ENCODE measurements at regions of chr6 and their contacts with region 1.

Region 1: DNA sequence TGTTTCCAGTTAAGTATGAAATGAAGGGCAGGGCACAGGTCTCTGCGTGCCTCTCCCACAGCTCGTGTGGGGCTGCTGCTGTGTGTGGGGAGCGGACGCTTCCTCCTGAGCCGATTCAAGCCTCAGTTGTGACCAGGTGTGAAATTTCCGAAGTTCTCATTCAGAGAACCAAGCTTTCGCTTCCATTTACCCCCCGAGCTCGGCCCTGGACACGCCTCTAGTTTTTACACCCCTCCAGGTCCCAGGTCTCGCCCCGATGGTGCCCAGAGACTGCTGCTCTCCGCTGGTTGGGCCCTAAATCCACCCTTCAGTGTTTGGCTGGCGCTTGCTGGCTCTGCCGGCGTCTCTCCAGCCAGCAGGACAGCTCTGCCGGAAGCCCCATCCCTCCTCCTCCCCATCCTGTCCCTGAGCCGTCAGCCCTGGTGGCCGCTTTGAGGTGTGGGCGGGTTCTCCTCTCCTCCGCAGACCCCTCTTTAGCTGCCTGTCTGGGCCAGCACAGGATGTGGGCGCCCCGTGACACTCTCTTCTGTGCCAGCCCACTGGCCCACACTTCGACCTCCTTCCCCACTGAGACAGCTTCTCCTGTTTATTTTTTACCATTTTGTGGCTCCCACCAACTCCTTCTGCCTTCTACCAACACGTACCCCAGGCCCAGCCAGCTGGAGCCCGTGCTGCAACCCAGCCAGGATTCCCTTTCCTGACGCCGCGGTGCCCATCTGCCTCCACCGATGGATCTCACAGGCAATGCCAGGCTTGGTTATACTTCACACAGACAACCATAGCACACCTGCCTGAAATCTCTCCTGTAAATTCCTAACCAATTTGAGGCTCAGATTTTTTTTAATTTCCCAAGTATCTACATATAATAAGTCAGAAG is 142.8 kb downstream of the DLL1 start:
- DNase-seq: peak; percentile 68 to 77
- ATAC-seq: peak; percentile 74 to 85 (median 81)
- H3K4me3 ChIP-seq: peak overlapping the region; percentile 34
- H3K4me3 Mint-ChIP-seq: peak overlapping the region; percentile 95
- H3K27ac ChIP-seq: peak overlapping the region; percentile 80
- H3K27ac Mint-ChIP-seq: peak overlapping the region; percentile 94
- H3K4me1 ChIP-seq: peaks cover 90% of the 10 kb centered on the region
- H3K4me1 Mint-ChIP-seq: peaks cover 62 to 84% of the 10 kb centered on the region in 2 donors
- H3K27me3 ChIP-seq: peaks cover 3% of the 10 kb centered on the region
- H3K27me3 Mint-ChIP-seq: peaks cover 0 to 30% of the 10 kb centered on the region in 2 donors
- CTCF ChIP-seq: no peak

Region 2: DNA sequence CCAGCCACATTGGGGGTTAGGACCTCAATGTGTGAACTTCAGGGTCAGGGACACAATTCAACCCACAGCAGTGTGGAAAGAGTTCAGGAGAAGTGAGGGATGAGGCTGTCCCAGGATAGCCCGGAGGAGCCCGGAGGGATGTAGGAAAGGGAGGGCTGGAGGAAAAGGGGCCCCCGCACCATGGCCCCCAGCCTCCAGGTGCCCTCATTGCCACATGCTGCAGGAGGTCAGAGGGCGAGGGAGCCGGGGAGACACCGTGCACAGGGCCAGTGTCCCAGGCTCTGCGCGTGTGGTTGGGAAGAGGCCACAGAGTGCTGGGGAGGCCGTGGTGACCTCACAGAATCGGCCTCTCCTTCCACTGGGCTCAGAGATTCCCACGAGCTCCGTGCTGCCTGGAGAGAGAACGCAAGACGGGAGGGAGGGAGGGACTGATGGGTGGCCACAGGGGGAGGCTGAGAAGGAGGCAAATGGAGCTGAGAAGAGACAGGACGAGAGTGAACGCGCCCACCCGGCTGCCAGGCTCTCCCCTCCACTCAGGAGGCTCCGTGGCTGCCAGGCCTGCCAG is 72.3 kb before region 1 on chr6:
- intact Hi-C with region 1: no loop called
- DNase-seq: peak in 1 of 2 donors; percentile 13
- ATAC-seq: peak in 1 of 3 donors; percentile 35
- H3K4me3 ChIP-seq: no peak overlapping the region
- H3K4me3 Mint-ChIP-seq: no peak overlapping the region
- H3K27ac ChIP-seq: no peak overlapping the region
- H3K27ac Mint-ChIP-seq: no peak overlapping the region
- H3K4me1 ChIP-seq: no peaks in the 10 kb centered on the region
- H3K4me1 Mint-ChIP-seq: no peaks in the 10 kb centered on the region
- H3K27me3 ChIP-seq: no peaks in the 10 kb centered on the region
- H3K27me3 Mint-ChIP-seq: peaks cover 30 to 36% of the 10 kb centered on the region in 2 donors
- CTCF ChIP-seq: no peak

Region 3: DNA sequence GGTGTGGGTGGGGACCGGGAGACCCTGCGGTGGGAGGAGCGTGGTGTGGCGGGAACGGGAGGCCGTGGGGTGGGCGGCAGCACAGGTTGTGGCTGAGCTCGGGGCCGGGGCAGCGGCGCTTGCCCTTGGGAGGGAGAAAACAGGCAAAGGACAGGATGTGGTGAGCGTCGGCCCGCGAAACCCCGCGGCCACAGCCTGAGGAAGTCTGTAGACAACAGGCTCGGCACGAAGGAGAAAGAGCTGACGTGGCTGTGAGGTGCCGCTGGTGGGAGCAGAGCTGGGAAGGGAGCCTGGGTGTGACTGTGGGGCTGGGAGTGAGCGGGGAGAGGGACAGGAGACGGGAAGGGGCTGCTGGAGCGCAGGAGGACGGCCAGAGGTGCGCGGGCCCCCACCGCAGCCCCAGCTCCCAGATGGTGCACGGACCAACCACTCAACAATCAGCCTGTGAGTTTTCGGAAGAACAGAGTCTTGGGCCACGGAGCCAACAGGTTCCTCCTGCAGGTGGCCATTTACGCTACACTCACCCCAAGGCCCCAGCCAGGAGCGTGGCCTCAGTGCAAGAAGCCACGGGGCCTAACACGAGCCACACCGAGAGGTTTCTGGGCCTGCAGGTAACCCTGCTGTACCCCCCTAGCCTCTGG is 60.0 kb before region 1 on chr6:
- intact Hi-C with region 1: loop called (anchors 2 kb)
- DNase-seq: peak; percentile 55 to 81
- ATAC-seq: peak; percentile 66 to 79 (median 74)
- H3K4me3 ChIP-seq: peak overlapping the region; percentile 48
- H3K4me3 Mint-ChIP-seq: peak overlapping the region; percentile 86
- H3K27ac ChIP-seq: peak overlapping the region; percentile 88
- H3K27ac Mint-ChIP-seq: peak overlapping the region; percentile 94 to 96
- H3K4me1 ChIP-seq: peaks cover 56% of the 10 kb centered on the region
- H3K4me1 Mint-ChIP-seq: peaks cover 29 to 52% of the 10 kb centered on the region in 2 donors
- H3K27me3 ChIP-seq: no peaks in the 10 kb centered on the region
- H3K27me3 Mint-ChIP-seq: no peaks in the 10 kb centered on the region
- CTCF ChIP-seq: no peak

Region 4: GRCh38 chr6:170179616-170180369 is 31.7 kb after region 1 on chr6:
- intact Hi-C with region 1: loop called (anchors 5 kb)
- DNase-seq: no peak
- ATAC-seq: no peak
- H3K4me3 ChIP-seq: no peak overlapping the region
- H3K4me3 Mint-ChIP-seq: no peak overlapping the region
- H3K27ac ChIP-seq: no peak overlapping the region
- H3K27ac Mint-ChIP-seq: no peak overlapping the region
- H3K4me1 ChIP-seq: peaks cover 24% of the 10 kb centered on the region
- H3K4me1 Mint-ChIP-seq: peaks cover 32 to 43% of the 10 kb centered on the region in 2 donors
- H3K27me3 ChIP-seq: no peaks in the 10 kb centered on the region
- H3K27me3 Mint-ChIP-seq: peaks cover 10 to 23% of the 10 kb centered on the region in 2 donors
- CTCF ChIP-seq: no peak